Stomach (tissue), 19 donors: ENCODE measurements at regions of chr1 and their contacts with region 1.

Region 1: DNA sequence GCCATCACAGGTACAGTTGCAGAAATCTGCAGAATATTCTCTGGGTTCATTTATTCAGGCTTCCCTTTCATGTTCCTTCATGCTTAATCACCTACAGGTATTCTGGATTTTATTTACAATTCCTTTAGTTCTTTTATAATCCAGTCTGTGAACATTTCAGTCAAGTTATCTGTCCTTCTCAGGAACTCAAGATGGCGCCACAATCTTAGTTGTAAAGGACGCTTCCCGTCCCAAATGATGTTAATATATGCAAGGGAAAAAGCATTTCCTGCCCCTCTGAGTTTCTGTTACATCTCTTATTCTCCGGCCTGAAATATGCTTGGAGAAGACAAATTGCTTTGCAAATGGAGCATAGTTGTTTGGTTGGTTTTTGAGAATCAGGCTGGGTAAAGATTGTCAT is 19.3 kb downstream of the F3 start:
- DNase-seq: peak in 1 of 2 donors; percentile 79
- H3K4me3 ChIP-seq: no peak overlapping the region
- H3K27ac ChIP-seq: no peak overlapping the region
- H3K4me1 ChIP-seq: peaks cover 0 to 5% (median 1%) of the 10 kb centered on the region in 4 donors
- H3K27me3 ChIP-seq: no peaks in the 10 kb centered on the region
- CTCF ChIP-seq: peak in 2 of 7 experiments; percentile 10 to 16
- EP300 ChIP-seq: no peak
- POLR2A ChIP-seq: no peak

Region 2: DNA sequence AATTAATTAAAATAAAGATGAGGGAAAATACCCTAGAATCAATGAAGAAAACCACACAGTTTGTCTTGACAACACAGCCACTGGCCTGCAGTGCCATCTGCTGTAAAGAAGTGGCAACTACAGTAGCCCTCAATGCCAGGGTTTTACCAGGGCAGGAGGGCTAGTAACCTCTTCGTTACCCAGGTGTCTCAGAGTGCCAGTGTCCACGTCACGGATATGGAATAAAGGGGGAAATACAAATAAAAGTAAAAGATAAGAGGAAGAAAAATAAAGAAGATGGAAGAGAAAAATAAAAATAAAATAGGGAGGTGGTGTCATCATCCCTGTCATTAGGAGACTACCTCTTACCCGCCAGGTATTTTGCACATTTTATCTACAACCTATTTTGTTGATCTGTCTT is 283.6 kb after region 1 on chr1:
- intact Hi-C with region 1: loop called (anchors 5 kb)
- DNase-seq: peak; percentile 64 to 82
- H3K4me3 ChIP-seq: no peak overlapping the region
- H3K27ac ChIP-seq: no peak overlapping the region
- H3K4me1 ChIP-seq: peaks cover 23 to 71% (median 35%) of the 10 kb centered on the region in 4 donors
- H3K27me3 ChIP-seq: no peaks in the 10 kb centered on the region
- CTCF ChIP-seq: peak in 6 of 7 experiments; percentile 7 to 98 (median 97)
- EP300 ChIP-seq: no peak
- POLR2A ChIP-seq: no peak